RWPE1 (cell line): ENCODE measurements at regions of chr10 and their contacts with region 1.

Region 1: GRCh38 chr10:130110246-130111112 is at the start of gene C10orf143:
- DNase-seq: peak; percentile 98
- H3K27ac ChIP-seq: peak within 1 kb of the TSS; percentile 88
- CTCF ChIP-seq: no peak

Region 2: GRCh38 chr10:129898706-129899268 is 211.7 kb before region 1 on chr10:
- CTCF ChIA-PET with region 1: no interaction called
- POLR2A ChIA-PET with region 1: no interaction called
- DNase-seq: no peak
- H3K27ac ChIP-seq: no peak overlapping the region
- CTCF ChIP-seq: no peak

Region 3: GRCh38 chr10:130127364-130128061 is 17.0 kb after region 1 on chr10:
- CTCF ChIA-PET with region 1: interaction called, 10 read pairs
- POLR2A ChIA-PET with region 1: interaction called, 6 read pairs
- DNase-seq: peak; percentile 85
- H3K27ac ChIP-seq: no peak overlapping the region
- CTCF ChIP-seq: peak; percentile 87

Region 4: DNA sequence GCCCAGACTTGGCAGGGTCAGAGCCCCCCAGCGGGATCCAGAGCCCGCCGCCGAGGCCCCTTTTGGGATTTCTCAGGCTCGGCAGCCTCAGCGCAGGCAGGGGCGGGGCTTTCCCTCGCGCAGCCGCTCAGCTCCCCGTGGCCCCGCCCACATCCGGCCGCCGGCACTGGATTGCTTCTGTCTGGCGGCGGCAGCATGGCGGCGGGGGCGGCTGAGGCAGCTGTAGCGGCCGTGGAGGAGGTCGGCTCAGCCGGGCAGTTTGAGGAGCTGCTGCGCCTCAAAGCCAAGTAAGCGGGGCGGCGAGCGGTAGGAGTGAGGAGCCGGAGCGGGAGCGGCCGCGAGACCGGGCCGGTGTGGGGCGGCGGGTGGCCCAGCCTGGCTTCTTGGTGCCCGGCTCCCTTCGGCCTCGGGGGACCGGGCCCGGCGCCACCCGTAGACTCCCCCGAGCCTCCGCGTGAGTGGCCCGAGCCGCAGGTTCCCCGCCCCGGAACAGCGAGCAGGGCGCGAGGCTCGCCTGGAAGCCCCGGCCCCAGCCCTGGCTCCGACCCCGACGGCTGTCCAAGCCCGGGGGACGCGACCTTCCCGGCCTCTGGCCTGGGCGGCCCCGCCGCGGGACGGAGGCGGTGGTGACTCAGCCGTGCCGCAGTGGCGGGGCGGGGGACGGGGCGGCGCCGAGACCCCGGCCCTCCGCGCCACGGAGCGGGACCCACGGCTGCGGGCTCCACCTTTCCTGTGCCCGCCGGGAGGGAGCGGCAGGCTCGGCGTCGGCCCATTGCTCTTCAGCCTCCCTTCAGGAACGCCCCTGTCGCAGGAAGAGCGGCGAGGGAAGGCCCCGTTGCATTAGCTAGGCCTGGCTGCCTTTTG is 26.0 kb after region 1 on chr10 and contains the start of gene GLRX3:
- CTCF ChIA-PET with region 1: interaction called, 6 read pairs
- POLR2A ChIA-PET with region 1: interaction called, 42 read pairs
- DNase-seq: peak; percentile 93
- H3K27ac ChIP-seq: peak within 1 kb of the TSS; percentile 94
- CTCF ChIP-seq: no peak